Activated naive CD4-positive, alpha-beta T cell treated with anti-CD3 and anti-CD28 coated beads, Interleukin-2, amount 10 ng/mL, durations not matched to agents 7 days and 5 days (primary cell): ENCODE measurements at regions of chr14 and their contacts with region 1.

Region 1: DNA sequence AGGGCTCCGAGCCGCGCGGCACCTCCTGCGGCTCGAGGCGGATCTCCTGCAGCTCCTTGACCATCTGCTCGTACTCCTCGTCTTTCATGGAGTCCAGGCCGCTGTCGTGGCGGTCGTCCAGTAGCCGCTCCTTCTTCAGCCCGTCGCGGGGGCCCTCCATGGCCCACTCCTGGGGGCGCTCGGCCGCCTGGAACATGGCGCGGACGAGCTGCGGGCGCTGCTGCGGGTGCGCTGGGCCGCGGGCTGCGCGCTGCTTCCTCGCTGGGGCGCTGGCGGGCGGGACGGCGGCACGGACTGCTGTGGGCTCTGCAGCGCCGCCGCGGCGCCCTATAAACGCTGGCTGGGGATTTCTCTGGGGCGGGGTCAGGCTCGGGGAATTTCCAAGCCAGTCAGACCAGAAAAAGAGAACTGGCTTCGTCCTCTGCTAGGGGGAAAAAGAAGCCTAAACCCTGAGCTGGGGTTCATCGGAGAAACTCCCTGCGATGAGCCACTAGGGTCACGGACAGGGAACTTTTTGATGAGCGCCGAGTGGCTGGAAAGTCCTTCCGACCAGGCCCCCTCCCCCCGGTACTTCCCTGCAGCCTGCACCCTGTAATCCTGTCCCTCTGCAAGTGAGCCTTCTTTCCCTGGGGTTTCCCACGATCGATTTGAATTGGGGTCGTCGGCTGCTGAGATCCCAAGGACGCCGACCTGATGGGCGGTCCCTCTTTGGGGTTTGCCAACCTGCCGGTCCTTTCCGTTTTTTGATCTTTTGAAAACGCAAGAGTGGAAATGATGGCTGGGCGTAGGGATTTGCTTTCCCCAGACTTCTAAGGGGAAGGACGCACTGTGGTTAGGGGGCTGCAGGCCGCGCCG is at the start of gene NFKBIA:
- DNase-seq: peak; percentile 92
- H3K4me3 Mint-ChIP-seq: peak within 1 kb of the TSS; percentile 89
- H3K27ac Mint-ChIP-seq: peak within 1 kb of the TSS; percentile 95
- H3K4me1 Mint-ChIP-seq: peaks cover 55% of the 10 kb centered on the region
- H3K27me3 Mint-ChIP-seq: peaks cover 4% of the 10 kb centered on the region

Region 2: GRCh38 chr14:35140718-35141581 is 263.7 kb before region 1 on chr14:
- CTCF ChIA-PET with region 1: interaction called, 18 read pairs
- DNase-seq: no peak
- H3K4me3 Mint-ChIP-seq: no peak overlapping the region
- H3K27ac Mint-ChIP-seq: no peak overlapping the region
- H3K4me1 Mint-ChIP-seq: peaks cover 3% of the 10 kb centered on the region
- H3K27me3 Mint-ChIP-seq: no peaks in the 10 kb centered on the region

Region 3: DNA sequence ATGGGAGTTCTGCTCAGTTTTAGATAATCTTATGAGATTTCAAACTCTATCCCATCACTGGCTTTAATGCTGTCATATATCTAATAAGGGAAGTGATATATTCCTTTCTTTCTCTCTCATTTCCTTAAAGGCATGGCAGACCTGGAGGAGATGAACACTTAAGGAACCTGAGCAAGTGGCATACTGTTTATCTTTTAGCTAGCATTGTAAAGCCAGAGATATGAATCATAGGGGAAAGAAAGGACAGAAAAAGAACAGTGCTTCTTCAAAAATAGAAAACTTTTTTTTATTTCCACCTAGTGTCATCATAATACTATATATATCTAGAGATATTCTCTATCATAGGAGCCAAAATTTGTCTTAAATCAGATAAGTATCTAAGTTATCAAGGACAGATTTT is 180.7 kb before region 1 on chr14:
- CTCF ChIA-PET with region 1: interaction called, 65 read pairs
- DNase-seq: no peak
- H3K4me3 Mint-ChIP-seq: no peak overlapping the region
- H3K27ac Mint-ChIP-seq: no peak overlapping the region
- H3K4me1 Mint-ChIP-seq: peaks cover 12% of the 10 kb centered on the region
- H3K27me3 Mint-ChIP-seq: no peaks in the 10 kb centered on the region

Region 4: GRCh38 chr14:35240231-35240630 is 164.4 kb before region 1 on chr14:
- CTCF ChIA-PET with region 1: no interaction called
- DNase-seq: no peak
- H3K4me3 Mint-ChIP-seq: no peak overlapping the region
- H3K27ac Mint-ChIP-seq: no peak overlapping the region
- H3K4me1 Mint-ChIP-seq: peaks cover 2% of the 10 kb centered on the region
- H3K27me3 Mint-ChIP-seq: no peaks in the 10 kb centered on the region

Region 5: DNA sequence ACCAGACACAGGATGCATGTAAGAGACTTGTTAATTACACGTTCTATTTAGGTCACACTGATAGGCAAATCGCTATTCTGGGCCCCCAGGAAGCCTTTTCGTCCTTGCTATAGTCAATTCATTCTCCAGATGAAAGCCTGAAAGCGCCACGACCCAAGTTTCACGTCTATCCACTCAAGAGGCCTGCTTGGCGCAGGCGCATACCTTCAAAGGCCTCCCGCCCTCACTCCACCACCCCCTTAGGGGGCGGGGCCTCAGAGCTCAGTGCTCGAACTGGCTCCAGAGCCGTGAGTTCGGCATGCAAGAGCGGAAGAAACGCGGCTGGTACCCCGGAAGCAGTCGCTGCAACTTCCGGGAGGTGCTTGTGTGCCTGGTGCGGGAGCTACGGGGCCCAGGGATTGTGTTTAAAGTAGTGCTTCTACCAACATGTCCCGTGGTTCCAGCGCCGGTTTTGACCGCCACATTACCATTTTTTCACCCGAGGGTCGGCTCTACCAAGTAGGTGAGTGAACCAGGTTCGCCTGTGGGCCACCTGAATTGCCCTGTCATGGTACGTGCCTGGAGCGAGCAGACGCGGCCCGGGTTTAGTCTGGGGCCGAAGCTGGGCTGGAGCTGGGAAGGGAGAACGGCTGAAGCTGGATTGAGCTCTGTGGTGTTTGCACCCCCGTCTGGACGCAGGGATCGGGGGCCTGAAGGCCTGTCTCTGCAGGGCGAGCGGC is 112.5 kb before region 1 on chr14 and contains the start of gene PSMA6:
- CTCF ChIA-PET with region 1: interaction called, 23 read pairs
- DNase-seq: peak; percentile 100
- H3K4me3 Mint-ChIP-seq: peak within 1 kb of the TSS; percentile 100
- H3K27ac Mint-ChIP-seq: peak within 1 kb of the TSS; percentile 95
- H3K4me1 Mint-ChIP-seq: peaks cover 53% of the 10 kb centered on the region
- H3K27me3 Mint-ChIP-seq: peaks cover 4% of the 10 kb centered on the region

Region 6: GRCh38 chr14:35416108-35416750 is 11.6 kb after region 1 on chr14:
- CTCF ChIA-PET with region 1: interaction called, 15 read pairs
- DNase-seq: peak; percentile 66
- H3K4me3 Mint-ChIP-seq: peak overlapping the region; percentile 38
- H3K27ac Mint-ChIP-seq: peak overlapping the region; percentile 88
- H3K4me1 Mint-ChIP-seq: peaks cover 46% of the 10 kb centered on the region
- H3K27me3 Mint-ChIP-seq: no peaks in the 10 kb centered on the region

Region 7: DNA sequence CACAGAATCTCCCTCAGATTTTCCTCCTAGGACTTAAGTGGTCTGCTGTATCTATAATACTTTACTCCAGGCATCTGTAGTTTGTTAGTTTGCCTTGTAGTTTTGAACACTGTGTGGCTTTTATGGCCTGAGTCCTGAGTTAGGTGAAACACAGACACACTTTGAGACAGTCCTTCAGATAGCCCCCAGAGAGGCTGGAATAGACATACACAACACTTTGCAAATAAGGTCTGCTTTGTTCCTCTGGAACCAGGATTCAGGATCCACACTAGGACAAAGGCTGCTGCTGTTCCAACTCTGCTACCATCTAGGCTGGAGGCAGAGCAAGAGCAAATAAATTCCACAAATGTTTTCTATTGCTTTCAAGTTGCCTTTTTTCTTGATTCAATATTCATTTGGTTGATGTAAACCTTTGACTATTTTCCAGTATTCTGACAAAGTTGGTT is 87.9 kb after region 1 on chr14:
- CTCF ChIA-PET with region 1: no interaction called
- DNase-seq: no peak
- H3K4me3 Mint-ChIP-seq: no peak overlapping the region
- H3K27ac Mint-ChIP-seq: no peak overlapping the region
- H3K4me1 Mint-ChIP-seq: no peaks in the 10 kb centered on the region
- H3K27me3 Mint-ChIP-seq: peaks cover 20% of the 10 kb centered on the region

Region 8: GRCh38 chr14:35503656-35504055 is 99.0 kb after region 1 on chr14:
- CTCF ChIA-PET with region 1: no interaction called
- DNase-seq: no peak
- H3K4me3 Mint-ChIP-seq: no peak overlapping the region
- H3K27ac Mint-ChIP-seq: no peak overlapping the region
- H3K4me1 Mint-ChIP-seq: no peaks in the 10 kb centered on the region
- H3K27me3 Mint-ChIP-seq: peaks cover 31% of the 10 kb centered on the region

Region 9: GRCh38 chr14:35632676-35633075 is 228.0 kb after region 1 on chr14:
- CTCF ChIA-PET with region 1: no interaction called
- DNase-seq: no peak
- H3K4me3 Mint-ChIP-seq: no peak overlapping the region
- H3K27ac Mint-ChIP-seq: no peak overlapping the region
- H3K4me1 Mint-ChIP-seq: no peaks in the 10 kb centered on the region
- H3K27me3 Mint-ChIP-seq: no peaks in the 10 kb centered on the region